ENCODE measurements at regions of chr6 and their contacts with region 1.

Region 1: DNA sequence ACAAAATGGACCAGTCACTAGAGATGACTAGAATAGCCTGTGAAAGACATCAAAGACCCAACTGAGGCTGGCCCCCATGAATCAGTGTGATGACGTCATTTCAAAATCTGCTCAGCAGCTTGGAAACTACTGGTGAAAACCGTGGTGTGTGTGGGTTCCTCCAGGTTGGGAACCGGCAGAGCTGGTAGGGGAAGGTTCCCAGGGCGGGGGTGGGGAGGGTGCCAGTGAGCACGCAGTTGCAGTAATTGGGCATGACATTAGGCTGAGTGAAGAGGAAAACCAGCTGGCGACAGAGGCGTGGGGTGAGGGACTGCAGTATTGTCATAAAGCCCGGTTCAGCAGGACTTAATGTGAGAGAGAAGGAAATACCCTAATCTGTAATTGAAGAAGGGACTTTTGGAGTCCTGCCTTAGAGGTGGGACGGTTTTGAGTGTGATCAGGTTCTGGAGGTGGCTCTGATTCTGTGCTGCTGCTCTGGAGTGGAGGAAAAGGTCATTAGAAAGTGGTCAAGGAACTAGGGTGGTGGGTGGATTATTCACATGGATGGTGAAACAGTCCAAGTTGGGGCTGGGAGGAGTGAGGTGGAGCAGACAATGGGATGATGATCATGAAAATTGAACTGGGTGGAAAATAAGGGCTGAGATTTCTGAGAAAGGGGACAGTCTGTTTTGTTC is 52.0 kb upstream of the MTHFD1L start:
- DNase-seq: peak; percentile 84
- H3K4me3 ChIP-seq: no peak overlapping the region
- H3K27ac ChIP-seq: peak overlapping the region; percentile 61
- H3K4me1 ChIP-seq: peaks cover 30% of the 10 kb centered on the region
- H3K27me3 ChIP-seq: no peaks in the 10 kb centered on the region
- CTCF ChIP-seq: no peak

Region 2: DNA sequence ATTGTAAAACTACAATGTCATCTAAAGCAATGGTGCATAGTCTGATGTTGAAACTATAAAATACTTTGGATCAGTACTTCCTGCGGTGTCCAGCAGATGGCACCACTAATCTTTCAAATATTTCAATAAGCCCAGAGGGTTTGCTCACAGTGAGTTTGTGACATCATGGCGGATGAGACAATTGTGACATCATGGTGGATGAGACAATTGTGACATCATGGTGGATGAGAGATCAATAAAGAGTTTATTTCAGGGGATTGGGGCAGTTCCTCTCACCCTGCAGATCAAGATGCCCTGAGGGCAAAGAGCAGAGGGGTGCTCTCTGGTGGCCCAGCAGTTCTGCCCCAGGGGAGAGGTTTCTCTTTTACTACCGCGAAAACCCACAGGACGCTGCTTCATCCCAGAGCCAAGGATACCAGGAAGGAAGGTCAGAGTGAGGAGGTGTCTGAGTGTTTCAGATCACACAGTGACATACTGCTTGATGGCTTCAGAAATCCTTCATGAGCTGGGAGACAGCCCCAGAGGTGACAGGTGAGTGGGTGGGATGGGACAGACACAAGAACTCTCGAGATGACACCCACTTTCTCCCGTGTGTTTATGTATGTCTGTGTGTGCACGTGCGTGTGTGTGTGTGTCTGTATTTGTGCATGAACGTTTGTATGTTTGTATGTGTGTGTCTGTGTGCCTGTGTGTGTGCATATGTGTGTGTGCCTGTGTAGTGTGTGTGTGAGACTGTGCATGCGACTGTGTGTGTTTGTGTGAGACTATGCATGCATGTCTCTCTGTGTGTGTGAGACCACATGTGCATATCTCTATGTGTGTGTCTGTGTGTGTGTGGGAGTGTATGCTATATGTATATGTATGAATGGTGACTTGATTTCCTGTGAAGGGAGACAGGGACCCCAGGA is 879.0 kb before region 1 on chr6:
- CTCF ChIA-PET with region 1: no interaction called
- POLR2A ChIA-PET with region 1: no interaction called
- intact Hi-C with region 1: loop called (anchors 2 kb)
- DNase-seq: peak; percentile 87
- H3K4me3 ChIP-seq: no peak overlapping the region
- H3K27ac ChIP-seq: no peak overlapping the region
- H3K4me1 ChIP-seq: no peaks in the 10 kb centered on the region
- H3K27me3 ChIP-seq: peaks cover 37% of the 10 kb centered on the region
- CTCF ChIP-seq: peak; percentile 82

Region 3: GRCh38 chr6:150079604-150080003 is 733.9 kb before region 1 on chr6:
- CTCF ChIA-PET with region 1: interaction called, 7 read pairs
- POLR2A ChIA-PET with region 1: no interaction called
- intact Hi-C with region 1: loop called (anchors 1 kb)
- DNase-seq: peak; percentile 33
- H3K4me3 ChIP-seq: no peak overlapping the region
- H3K27ac ChIP-seq: no peak overlapping the region
- H3K4me1 ChIP-seq: no peaks in the 10 kb centered on the region
- H3K27me3 ChIP-seq: no peaks in the 10 kb centered on the region
- CTCF ChIP-seq: no peak

Region 4: DNA sequence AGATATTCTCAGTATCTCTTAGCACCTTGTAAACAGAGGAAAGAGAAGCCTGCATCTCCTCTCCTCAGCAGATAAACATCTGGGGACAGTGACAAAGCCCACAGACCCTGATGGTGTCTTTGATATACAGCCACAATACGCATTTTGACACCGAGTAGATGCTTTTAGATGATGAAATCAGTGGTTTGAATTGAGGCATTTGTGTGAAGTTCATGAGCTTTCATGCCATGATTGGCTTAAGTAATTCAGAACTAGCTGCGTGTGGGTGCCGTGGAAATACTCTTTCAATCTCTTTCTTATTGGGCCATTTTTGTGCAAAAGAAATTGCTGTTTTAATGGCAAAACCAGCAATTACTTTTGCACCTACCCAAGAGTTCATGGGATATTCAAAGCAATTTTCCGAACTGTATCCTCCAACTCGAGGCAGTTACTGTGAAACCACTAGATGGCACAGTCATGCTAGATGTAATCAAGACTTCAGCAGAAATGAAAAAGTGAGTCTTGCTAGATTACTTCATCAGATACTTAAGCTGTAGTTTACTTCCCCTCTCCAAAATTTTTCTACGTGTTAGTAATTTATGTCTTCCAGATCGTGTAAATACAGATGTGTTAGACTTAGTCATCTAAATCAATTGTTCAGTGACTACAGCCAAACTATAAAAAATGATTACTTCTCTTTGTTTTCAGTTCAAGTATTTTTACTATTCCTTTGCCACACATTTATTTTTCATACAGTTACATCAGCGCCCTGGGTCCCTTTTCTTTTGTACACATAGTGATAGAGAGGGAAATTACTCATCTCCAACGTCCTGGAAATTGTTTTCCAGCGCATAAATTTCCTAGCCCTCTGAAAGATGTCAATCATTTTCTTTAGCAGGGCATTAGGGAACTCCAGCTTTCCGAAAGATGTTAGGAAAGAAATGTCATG is 395.3 kb before region 1 on chr6:
- CTCF ChIA-PET with region 1: interaction called, 60 read pairs
- POLR2A ChIA-PET with region 1: interaction called, 3 read pairs
- intact Hi-C with region 1: loop called (anchors 1 kb)
- DNase-seq: peak; percentile 91
- H3K4me3 ChIP-seq: peak overlapping the region; percentile 39
- H3K27ac ChIP-seq: peak overlapping the region; percentile 92
- H3K4me1 ChIP-seq: peaks cover 27% of the 10 kb centered on the region
- H3K27me3 ChIP-seq: no peaks in the 10 kb centered on the region
- CTCF ChIP-seq: peak; percentile 88

Region 5: DNA sequence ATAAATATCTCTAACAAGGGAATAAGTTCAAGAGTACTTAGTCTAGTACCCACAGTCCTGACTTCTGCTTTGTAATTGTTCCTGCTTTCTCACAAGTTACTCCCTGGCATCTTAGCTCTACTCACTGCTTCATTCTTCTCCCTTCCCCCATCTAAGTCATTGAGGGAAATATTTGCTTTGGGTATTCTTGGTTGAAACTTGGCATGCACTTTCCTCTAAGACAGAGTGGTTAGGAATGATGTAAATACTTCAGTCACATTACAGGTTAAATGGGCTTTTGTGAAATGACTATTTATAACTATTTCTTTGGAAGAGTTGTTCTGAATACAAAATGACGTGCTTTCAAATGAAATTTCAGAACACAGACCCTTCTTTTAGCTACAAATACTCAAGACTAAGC is 281.5 kb before region 1 on chr6:
- CTCF ChIA-PET with region 1: no interaction called
- POLR2A ChIA-PET with region 1: no interaction called
- intact Hi-C with region 1: no loop called
- DNase-seq: no peak
- H3K4me3 ChIP-seq: no peak overlapping the region
- H3K27ac ChIP-seq: no peak overlapping the region
- H3K4me1 ChIP-seq: no peaks in the 10 kb centered on the region
- H3K27me3 ChIP-seq: no peaks in the 10 kb centered on the region
- CTCF ChIP-seq: no peak

Region 6: GRCh38 chr6:150683320-150683719 is 130.1 kb before region 1 on chr6:
- CTCF ChIA-PET with region 1: no interaction called
- POLR2A ChIA-PET with region 1: no interaction called
- intact Hi-C with region 1: no loop called
- DNase-seq: no peak
- H3K4me3 ChIP-seq: no peak overlapping the region
- H3K27ac ChIP-seq: no peak overlapping the region
- H3K4me1 ChIP-seq: peaks cover 10% of the 10 kb centered on the region
- H3K27me3 ChIP-seq: no peaks in the 10 kb centered on the region
- CTCF ChIP-seq: no peak

Region 7: GRCh38 chr6:151339369-151339768 is 525.9 kb after region 1 on chr6:
- CTCF ChIA-PET with region 1: interaction called, 15 read pairs
- POLR2A ChIA-PET with region 1: interaction called, 5 read pairs
- intact Hi-C with region 1: loop called (anchors 2 kb)
- DNase-seq: no peak
- H3K4me3 ChIP-seq: no peak overlapping the region
- H3K27ac ChIP-seq: no peak overlapping the region
- H3K4me1 ChIP-seq: peaks cover 13% of the 10 kb centered on the region
- H3K27me3 ChIP-seq: no peaks in the 10 kb centered on the region
- CTCF ChIP-seq: no peak

Measured in A673 (cell line).